ENCODE measurements at regions of chr3 and their contacts with region 1.

Region 1: GRCh38 chr3:102536456-102536855 is 101.6 kb downstream of the ZPLD1 start:
- DNase-seq: no peak
- H3K4me3 ChIP-seq: peak overlapping the region in 10 of 59 donors; percentile 5 to 45 (median 16)
- H3K27ac ChIP-seq: no peak overlapping the region
- H3K27me3 ChIP-seq: peaks cover 0 to 14% (median 0%) of the 10 kb centered on the region in 45 donors
- CTCF ChIP-seq: peak; percentile 18 to 83 (median 63)

Region 2: DNA sequence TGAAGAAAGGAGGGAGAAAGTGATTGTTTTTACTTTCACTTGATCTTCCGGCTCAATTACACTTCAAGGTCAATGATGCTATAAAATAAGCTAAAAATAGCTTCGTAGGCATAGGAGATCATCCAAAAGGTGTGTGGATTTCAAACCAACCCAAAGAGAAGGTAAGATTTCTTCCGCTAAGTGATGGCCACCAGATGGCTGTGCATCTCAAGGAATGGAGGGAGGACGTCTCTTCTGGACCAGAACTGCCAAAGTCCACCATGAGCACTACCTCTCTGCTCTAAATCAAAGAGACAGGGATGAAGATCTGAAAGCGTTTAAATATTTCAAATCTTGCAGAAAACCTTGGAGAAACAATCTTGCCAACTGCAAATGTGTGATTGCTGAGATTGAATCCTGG is 300.8 kb before region 1 on chr3:
- intact Hi-C with region 1: loop called in 1 of 2 experiments (anchors 2 kb)
- DNase-seq: no peak
- H3K4me3 ChIP-seq: no peak overlapping the region
- H3K27ac ChIP-seq: no peak overlapping the region
- H3K27me3 ChIP-seq: no peaks in the 10 kb centered on the region
- CTCF ChIP-seq: peak in 19 of 56 donors; percentile 8 to 93 (median 67)

Measured in dorsolateral prefrontal cortex (tissue), 120 donors.